Activated T-helper 2 cell treated with anti-CD3 and anti-CD28 coated beads, Interferon-gamma antibody, Interleukin-2, Interleukin-4, amounts not matched to agents 10 μg/mL and 5 μg/mL and 100 μg/mL, durations not matched to agents 14 hours and 24 hours and 36 hours (primary cell): ENCODE measurements at regions of chr18 and their contacts with region 1.

Region 1: DNA sequence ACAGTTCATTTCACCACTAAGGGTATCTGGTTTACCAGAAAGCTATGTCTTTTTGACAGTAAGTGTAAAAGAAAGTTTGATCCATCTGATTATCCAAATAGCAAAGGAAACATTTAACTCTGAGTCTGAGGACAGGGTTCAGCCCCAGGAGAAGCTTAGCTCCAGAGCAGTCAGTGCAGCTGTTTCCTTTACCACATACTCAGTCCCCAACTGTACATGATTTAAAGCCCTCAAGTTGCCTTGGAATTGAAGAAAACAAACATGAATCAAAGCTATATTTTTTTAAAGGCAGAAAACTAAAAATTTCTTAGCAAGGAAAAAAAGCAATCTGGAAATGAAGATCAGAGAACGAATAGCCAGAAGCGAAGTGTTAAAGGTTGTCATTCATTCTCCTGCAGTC is 746.0 kb downstream of the METTL4 start:
- DNase-seq: no peak
- H3K4me3 Mint-ChIP-seq: no peak overlapping the region
- H3K27ac Mint-ChIP-seq: no peak overlapping the region
- H3K4me1 Mint-ChIP-seq: no peaks in the 10 kb centered on the region
- H3K27me3 Mint-ChIP-seq: no peaks in the 10 kb centered on the region

Region 2: GRCh38 chr18:1760901-1761300 is 64.4 kb before region 1 on chr18:
- intact Hi-C with region 1: loop called (anchors 10 kb)
- DNase-seq: no peak
- H3K4me3 Mint-ChIP-seq: no peak overlapping the region
- H3K27ac Mint-ChIP-seq: no peak overlapping the region
- H3K4me1 Mint-ChIP-seq: no peaks in the 10 kb centered on the region
- H3K27me3 Mint-ChIP-seq: no peaks in the 10 kb centered on the region